MCF 10A (cell line): ENCODE measurements at regions of chr6 and their contacts with region 1.

Region 1: GRCh38 chr6:72873433-72873832 is 251.6 kb downstream of the KCNQ5 start:
- DNase-seq: no peak
- H3K4me3 Mint-ChIP-seq: no peak overlapping the region
- H3K27ac Mint-ChIP-seq: no peak overlapping the region
- H3K4me1 Mint-ChIP-seq: peaks cover 5% of the 10 kb centered on the region
- H3K27me3 Mint-ChIP-seq: no peaks in the 10 kb centered on the region
- CTCF ChIP-seq: no peak

Region 2: DNA sequence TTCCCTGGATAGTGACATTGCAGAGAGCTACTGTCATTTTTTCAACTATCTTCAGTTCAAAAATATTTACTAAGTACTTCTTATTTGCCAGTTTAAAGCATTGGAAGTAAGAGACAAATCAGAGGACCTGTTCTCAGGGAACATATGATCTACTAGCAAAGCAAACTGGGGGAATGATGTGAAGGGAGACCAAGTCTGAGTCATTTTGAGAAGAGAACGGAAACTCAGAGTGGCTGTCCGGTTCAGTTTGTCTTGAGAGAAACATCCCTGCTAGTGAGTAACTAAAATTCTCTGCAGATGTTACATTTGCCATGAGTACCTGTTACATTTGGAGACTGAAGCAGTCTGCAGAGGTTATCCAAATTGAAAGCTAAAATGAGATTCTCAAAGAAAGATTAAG is 133.3 kb before region 1 on chr6:
- CTCF ChIA-PET with region 1: no interaction called
- POLR2A ChIA-PET with region 1: no interaction called
- intact Hi-C with region 1: no loop called
- DNase-seq: no peak
- H3K4me3 Mint-ChIP-seq: no peak overlapping the region
- H3K27ac Mint-ChIP-seq: no peak overlapping the region
- H3K4me1 Mint-ChIP-seq: peaks cover 5% of the 10 kb centered on the region
- H3K27me3 Mint-ChIP-seq: no peaks in the 10 kb centered on the region
- CTCF ChIP-seq: no peak

Region 3: GRCh38 chr6:72835749-72836148 is 37.7 kb before region 1 on chr6:
- CTCF ChIA-PET with region 1: no interaction called
- POLR2A ChIA-PET with region 1: no interaction called
- intact Hi-C with region 1: loop called (anchors 1 kb)
- DNase-seq: no peak
- H3K4me3 Mint-ChIP-seq: no peak overlapping the region
- H3K27ac Mint-ChIP-seq: no peak overlapping the region
- H3K4me1 Mint-ChIP-seq: no peaks in the 10 kb centered on the region
- H3K27me3 Mint-ChIP-seq: no peaks in the 10 kb centered on the region
- CTCF ChIP-seq: no peak